ENCODE measurements at regions of chr17 and their contacts with region 1.

Region 1: DNA sequence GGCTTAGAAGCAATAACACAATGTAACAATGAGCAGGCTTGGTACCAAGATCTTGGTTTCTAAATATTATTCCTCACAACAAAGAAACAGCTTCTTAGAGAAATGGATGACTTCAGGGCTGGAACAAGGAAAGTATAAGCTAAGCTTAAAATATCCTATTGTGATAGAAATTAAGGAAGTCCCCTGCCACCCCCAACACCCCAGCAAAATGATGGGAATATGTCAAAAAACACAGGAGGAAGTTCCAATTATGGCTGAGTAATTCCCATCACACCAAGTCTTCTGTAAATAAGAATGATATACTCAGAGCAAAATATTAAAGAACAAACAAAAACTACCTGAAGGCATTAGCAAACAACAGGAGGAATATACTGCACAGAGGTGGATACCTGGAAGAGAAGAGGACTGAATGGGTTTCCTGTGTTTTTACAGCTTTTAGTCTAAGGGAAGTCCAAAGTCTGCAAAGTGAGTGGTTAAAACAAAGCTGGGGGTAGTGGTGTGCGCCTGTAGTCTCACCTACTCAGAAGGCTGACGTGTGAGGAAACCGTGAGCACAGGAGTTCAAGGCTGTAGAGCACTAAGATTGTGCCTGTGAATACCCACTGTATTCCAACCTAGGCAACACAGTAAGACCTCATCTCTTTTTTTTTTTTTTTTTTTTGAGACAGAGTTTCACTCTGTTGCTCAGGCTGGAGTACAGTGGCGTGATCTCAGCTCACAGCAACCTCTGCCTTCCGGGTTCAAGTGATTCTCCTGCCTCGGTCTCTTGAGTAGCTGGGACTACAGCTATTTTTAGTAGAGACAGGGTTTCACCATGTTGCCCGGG is 17.1 kb upstream of the ATP6V0A1 start:
- DNase-seq: no peak
- H3K4me3 Mint-ChIP-seq: no peak overlapping the region
- H3K27ac Mint-ChIP-seq: no peak overlapping the region
- H3K4me1 Mint-ChIP-seq: peaks cover 10% of the 10 kb centered on the region
- H3K27me3 Mint-ChIP-seq: peaks cover 30% of the 10 kb centered on the region

Region 2: DNA sequence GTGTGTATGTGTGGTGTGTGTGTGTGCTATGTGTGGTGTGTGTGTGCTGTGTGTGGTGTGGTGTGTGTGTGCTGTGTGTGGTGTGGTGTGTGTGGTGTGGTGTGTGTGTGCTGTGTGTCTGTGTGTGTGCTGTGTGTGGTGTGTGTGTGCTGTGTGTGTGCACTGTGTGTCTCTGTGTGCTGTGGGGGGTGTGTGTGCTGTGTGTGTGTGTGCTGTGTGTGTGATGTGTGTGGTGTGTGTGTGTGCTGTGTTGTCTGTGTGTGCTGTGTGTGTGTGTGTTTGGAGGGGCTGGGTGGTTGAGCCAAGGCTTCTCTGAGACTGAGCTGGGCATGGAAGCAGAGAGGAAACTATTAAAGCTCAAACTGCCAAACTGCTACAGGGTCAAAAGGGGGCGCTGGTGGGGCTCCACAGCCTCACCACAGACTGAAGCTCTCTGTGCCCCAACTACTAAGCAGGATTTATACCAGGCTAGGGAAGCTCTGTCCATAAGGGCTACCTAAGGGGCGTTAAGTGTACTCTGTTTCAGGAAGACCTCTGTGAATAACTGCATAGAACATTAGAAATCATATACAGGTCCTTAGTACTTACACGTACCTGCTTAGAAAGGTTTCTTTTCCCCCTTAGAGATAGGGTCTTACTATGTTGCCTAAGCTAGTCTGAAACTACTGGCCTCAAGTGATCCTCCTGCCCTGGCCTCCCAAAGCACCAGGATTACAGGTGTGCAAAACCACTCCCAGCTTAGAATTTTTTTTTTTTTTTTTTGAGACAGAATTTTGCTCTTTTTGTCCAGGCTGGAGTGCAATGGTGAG is 219.4 kb before region 1 on chr17:
- CTCF ChIA-PET with region 1: no interaction called
- POLR2A ChIA-PET with region 1: no interaction called
- DNase-seq: peak; percentile 64
- H3K4me3 Mint-ChIP-seq: no peak overlapping the region
- H3K27ac Mint-ChIP-seq: peak overlapping the region; percentile 37
- H3K4me1 Mint-ChIP-seq: no peaks in the 10 kb centered on the region
- H3K27me3 Mint-ChIP-seq: no peaks in the 10 kb centered on the region

Region 3: GRCh38 chr17:42428141-42428944 is 13.2 kb before region 1 on chr17:
- CTCF ChIA-PET with region 1: interaction called, 12 read pairs
- POLR2A ChIA-PET with region 1: no interaction called
- DNase-seq: peak; percentile 38
- H3K4me3 Mint-ChIP-seq: no peak overlapping the region
- H3K27ac Mint-ChIP-seq: no peak overlapping the region
- H3K4me1 Mint-ChIP-seq: peaks cover 1% of the 10 kb centered on the region
- H3K27me3 Mint-ChIP-seq: peaks cover 45% of the 10 kb centered on the region

Region 4: GRCh38 chr17:42508426-42509165 is 67.0 kb after region 1 on chr17:
- CTCF ChIA-PET with region 1: no interaction called
- POLR2A ChIA-PET with region 1: no interaction called
- DNase-seq: no peak
- H3K4me3 Mint-ChIP-seq: no peak overlapping the region
- H3K27ac Mint-ChIP-seq: no peak overlapping the region
- H3K4me1 Mint-ChIP-seq: peaks cover 9% of the 10 kb centered on the region
- H3K27me3 Mint-ChIP-seq: peaks cover 34% of the 10 kb centered on the region